ENCODE measurements at regions of chr12 and their contacts with region 1.

Region 1: DNA sequence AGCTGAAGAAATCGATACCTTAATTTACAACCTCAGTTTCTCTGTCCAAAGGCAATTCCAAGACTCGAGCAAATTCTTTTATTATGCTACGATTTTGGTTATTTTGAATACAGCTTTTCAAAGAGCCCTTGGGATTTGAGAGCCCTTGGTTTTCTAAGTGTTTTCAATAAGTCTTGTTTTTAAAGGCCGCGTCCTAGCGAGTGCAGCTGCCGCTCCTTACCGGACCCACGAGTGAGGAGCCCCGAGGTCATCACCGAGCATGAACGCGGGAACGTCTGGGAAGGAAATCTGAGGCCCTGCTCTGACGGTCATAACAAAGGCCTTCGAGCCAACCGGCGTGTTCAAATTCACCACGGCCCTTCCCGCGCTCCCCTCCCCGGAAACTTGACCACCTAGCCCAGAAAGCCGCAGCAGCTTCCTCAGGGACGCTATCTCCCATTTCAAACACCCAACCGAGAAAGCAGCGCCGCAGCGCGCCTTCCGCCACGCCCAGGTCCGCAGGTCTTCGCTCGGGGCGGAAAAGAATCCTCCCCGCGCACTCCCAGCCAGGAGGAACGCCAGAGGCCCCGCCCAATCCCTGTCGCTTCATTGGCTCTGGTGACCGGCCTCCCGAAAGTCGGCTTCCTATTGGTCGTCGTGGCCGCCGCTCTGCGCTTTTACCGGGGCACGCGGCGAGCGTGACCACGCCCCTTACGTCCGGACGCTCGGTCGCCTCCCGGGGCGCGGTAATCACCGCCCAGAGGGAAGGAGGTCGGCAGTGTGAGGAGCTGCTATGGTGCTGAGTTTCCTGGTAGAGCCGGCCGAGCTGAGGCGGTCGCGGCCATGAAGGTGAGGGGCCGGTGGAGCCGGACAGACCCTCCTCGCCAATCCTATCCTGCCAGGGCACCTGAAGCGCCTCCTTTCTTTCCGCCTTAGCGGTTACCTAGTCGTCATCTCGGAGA is at the start of gene RNF34:
- DNase-seq: peak; percentile 99
- ATAC-seq: peak; percentile 91
- H3K4me3 Mint-ChIP-seq: peak within 1 kb of the TSS; percentile 86
- H3K27ac Mint-ChIP-seq: peak within 1 kb of the TSS; percentile 93
- H3K4me1 Mint-ChIP-seq: peaks cover 33% of the 10 kb centered on the region
- H3K27me3 Mint-ChIP-seq: no peaks in the 10 kb centered on the region
- total RNA-seq, gene RNF34: 64.2 to 75.7 TPM

Region 2: GRCh38 chr12:121038861-121039666 is 360.6 kb before region 1 on chr12 and contains the start of gene OASL:
- CTCF ChIA-PET with region 1: interaction called, 3 read pairs
- POLR2A ChIA-PET with region 1: no interaction called
- intact Hi-C with region 1: loop called in 1 of 2 experiments (anchors 5 kb)
- DNase-seq: peak; percentile 72
- ATAC-seq: peak; percentile 58
- H3K4me3 Mint-ChIP-seq: peak within 1 kb of the TSS; percentile 78
- H3K27ac Mint-ChIP-seq: peak within 1 kb of the TSS; percentile 91
- H3K4me1 Mint-ChIP-seq: peaks cover 52% of the 10 kb centered on the region
- H3K27me3 Mint-ChIP-seq: peaks cover 14% of the 10 kb centered on the region
- total RNA-seq, gene OASL: 13.9 to 19.6 TPM

Region 3: DNA sequence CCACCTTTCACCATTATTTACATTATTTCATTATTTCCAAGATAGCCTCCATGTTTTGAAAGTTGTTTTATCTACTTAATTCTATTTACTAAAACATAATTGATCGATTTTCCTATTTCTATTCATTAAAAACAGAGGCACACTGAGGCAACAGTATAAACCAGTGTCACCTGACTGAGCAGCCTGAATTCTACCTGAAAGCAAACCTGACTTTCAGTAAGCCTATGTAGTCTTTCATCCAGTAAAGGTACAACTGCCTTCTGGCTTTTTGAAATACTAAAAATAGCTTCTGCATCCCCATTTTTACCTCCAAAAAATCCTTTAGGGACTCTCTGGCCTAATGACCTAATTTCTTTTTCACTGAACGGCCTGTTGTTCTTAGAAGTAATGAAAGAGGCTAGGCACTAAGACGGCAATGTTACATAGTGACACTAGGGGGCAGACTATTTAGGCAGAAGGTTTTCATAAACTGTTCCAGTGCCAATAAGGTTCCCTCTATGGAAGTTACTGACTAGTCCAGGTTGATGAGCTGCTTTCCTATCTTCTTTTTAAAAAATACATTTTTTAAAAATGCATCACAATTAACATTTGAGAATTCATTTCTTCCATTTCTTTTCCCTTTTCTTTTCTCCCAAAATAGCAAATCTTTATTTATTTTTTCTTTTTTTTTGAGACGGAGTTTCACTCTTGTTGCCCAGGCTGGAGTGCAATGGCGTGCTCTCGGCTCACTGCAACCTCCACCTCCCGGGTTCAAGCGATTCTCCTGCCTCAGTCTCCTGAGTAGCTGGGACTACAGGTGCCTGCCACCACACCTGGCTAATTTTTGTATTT is 64.9 kb before region 1 on chr12:
- CTCF ChIA-PET with region 1: interaction called, 14 read pairs
- POLR2A ChIA-PET with region 1: interaction called, 7 read pairs
- intact Hi-C with region 1: loop called (anchors 2 to 5 kb)
- DNase-seq: no peak
- ATAC-seq: peak; percentile 83
- H3K4me3 Mint-ChIP-seq: no peak overlapping the region
- H3K27ac Mint-ChIP-seq: no peak overlapping the region
- H3K4me1 Mint-ChIP-seq: no peaks in the 10 kb centered on the region
- H3K27me3 Mint-ChIP-seq: no peaks in the 10 kb centered on the region

Region 4: DNA sequence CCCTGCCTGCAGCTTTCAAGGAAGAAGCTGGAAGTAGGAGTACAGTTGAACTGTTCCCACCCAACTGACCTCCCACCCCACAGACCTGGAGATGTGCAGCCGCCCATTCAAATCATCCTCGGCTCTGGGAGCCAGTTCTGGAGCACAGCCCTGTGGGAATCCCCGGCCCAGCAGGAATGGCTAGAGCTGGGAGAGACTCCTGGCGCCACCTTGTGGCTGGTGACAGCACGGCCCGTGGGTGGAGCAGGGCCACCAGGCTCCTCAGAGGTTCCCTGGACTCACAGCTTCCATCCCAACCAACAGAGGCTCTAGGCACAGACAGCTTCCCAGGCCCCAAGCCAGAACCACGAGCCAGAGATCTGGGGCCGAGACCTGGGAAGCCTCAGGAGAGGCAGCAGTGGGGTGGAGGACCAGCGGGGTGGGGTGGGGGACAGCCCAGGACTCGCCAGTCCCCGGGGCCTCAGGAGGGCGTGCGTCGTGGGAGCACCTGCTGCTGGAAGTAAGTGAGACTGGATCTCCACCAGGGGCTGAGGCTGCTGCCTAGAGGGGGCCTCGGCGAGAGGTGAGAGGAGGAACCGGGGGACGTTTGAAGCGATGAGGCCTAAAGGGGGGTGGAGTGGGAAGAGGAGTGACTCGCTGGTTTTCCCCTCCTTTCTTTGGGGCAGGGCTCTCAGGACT is 43.7 kb after region 1 on chr12:
- CTCF ChIA-PET with region 1: interaction called, 21 read pairs
- POLR2A ChIA-PET with region 1: interaction called, 7 read pairs
- intact Hi-C with region 1: no loop called
- DNase-seq: peak; percentile 85
- ATAC-seq: peak; percentile 82
- H3K4me3 Mint-ChIP-seq: no peak overlapping the region
- H3K27ac Mint-ChIP-seq: peak overlapping the region; percentile 70
- H3K4me1 Mint-ChIP-seq: peaks cover 11% of the 10 kb centered on the region
- H3K27me3 Mint-ChIP-seq: no peaks in the 10 kb centered on the region

Region 5: GRCh38 chr12:121560392-121561008 is 160.8 kb after region 1 on chr12:
- CTCF ChIA-PET with region 1: no interaction called
- POLR2A ChIA-PET with region 1: no interaction called
- intact Hi-C with region 1: no loop called
- DNase-seq: no peak
- ATAC-seq: no peak
- H3K4me3 Mint-ChIP-seq: no peak overlapping the region
- H3K27ac Mint-ChIP-seq: peak overlapping the region; percentile 31
- H3K4me1 Mint-ChIP-seq: peaks cover 8% of the 10 kb centered on the region
- H3K27me3 Mint-ChIP-seq: no peaks in the 10 kb centered on the region

Region 6: GRCh38 chr12:121590476-121591143 is 190.9 kb after region 1 on chr12:
- CTCF ChIA-PET with region 1: no interaction called
- POLR2A ChIA-PET with region 1: no interaction called
- intact Hi-C with region 1: loop called in 1 of 2 experiments (anchors 1 kb)
- DNase-seq: peak; percentile 79
- ATAC-seq: peak; percentile 82
- H3K4me3 Mint-ChIP-seq: peak overlapping the region; percentile 75
- H3K27ac Mint-ChIP-seq: peak overlapping the region; percentile 98
- H3K4me1 Mint-ChIP-seq: peaks cover 32% of the 10 kb centered on the region
- H3K27me3 Mint-ChIP-seq: no peaks in the 10 kb centered on the region

Measured in activated CD4-positive, alpha-beta T cell treated with anti-CD3 and anti-CD28 coated beads for 36 hours (primary cell).